ENCODE measurements at regions of chr14 and their contacts with region 1.

Region 1: DNA sequence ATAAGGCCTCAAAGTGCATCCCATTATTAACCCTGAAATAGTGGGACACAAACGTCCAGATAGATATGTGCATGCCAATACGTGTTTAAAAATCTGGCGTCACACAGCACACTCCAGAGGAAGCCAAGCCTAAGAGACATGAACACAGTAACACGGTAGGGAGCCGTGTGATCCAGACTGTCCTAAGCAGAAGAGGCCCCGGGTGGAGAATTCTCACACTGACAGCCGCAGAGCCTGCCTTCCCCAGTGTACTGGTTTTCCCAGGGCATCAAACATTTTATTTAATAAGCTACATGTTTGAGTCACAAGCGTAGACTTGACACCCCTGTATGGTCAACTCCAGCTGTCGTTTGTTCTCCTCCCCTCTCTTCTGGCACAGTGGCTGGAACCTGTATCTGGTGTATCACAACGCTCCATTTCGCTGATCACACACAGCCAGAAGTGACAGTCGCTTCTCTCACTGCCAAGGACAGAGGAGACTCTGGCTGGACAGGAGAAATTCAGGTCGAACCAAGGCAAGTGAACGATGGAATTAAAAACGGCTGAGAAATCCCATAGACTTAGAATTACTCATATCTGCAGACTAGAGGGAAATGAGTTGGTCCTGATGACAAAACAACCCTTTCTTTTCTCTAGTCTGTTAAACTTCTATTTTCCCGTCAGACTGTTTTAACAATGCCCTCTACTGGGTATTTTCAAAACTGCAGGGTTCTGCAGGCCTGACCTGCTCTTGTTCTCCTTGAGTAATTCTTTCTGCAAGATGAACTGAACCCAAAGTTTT is 359.9 kb downstream of the RGS6 start:
- DNase-seq: peak in 2 of 9 donors; percentile 1 to 13
- ATAC-seq: no peak
- H3K4me3 ChIP-seq: no peak overlapping the region
- H3K4me3 Mint-ChIP-seq: no peak overlapping the region
- H3K27ac ChIP-seq: no peak overlapping the region
- H3K27ac Mint-ChIP-seq: no peak overlapping the region
- H3K4me1 ChIP-seq: no peaks in the 10 kb centered on the region
- H3K4me1 Mint-ChIP-seq: no peaks in the 10 kb centered on the region
- H3K27me3 ChIP-seq: no peaks in the 10 kb centered on the region
- H3K27me3 Mint-ChIP-seq: peaks cover 15 to 36% (median 30%) of the 10 kb centered on the region in 5 donors

Region 2: GRCh38 chr14:72023722-72024407 is 268.2 kb before region 1 on chr14:
- CTCF ChIA-PET with region 1: no interaction called
- POLR2A ChIA-PET with region 1: no interaction called
- intact Hi-C with region 1: loop called in 1 of 2 experiments (anchors 5 kb)
- DNase-seq: peak in 5 of 9 donors; percentile 6 to 33 (median 17)
- ATAC-seq: peak; percentile 61
- H3K4me3 ChIP-seq: no peak overlapping the region
- H3K4me3 Mint-ChIP-seq: no peak overlapping the region
- H3K27ac ChIP-seq: no peak overlapping the region
- H3K27ac Mint-ChIP-seq: no peak overlapping the region
- H3K4me1 ChIP-seq: no peaks in the 10 kb centered on the region
- H3K4me1 Mint-ChIP-seq: peaks cover 0 to 9% (median 0%) of the 10 kb centered on the region in 7 donors
- H3K27me3 ChIP-seq: no peaks in the 10 kb centered on the region
- H3K27me3 Mint-ChIP-seq: peaks cover 35 to 49% (median 40%) of the 10 kb centered on the region in 5 donors

Region 3: GRCh38 chr14:72315720-72316119 is 23.6 kb after region 1 on chr14:
- CTCF ChIA-PET with region 1: no interaction called
- POLR2A ChIA-PET with region 1: no interaction called
- intact Hi-C with region 1: no loop called
- DNase-seq: no peak
- ATAC-seq: no peak
- H3K4me3 ChIP-seq: no peak overlapping the region
- H3K4me3 Mint-ChIP-seq: no peak overlapping the region
- H3K27ac ChIP-seq: no peak overlapping the region
- H3K27ac Mint-ChIP-seq: no peak overlapping the region
- H3K4me1 ChIP-seq: no peaks in the 10 kb centered on the region
- H3K4me1 Mint-ChIP-seq: peaks cover 0 to 11% (median 0%) of the 10 kb centered on the region in 7 donors
- H3K27me3 ChIP-seq: no peaks in the 10 kb centered on the region
- H3K27me3 Mint-ChIP-seq: peaks cover 15 to 38% (median 30%) of the 10 kb centered on the region in 5 donors